Activated CD8-positive, alpha-beta T cell treated with anti-CD3 and anti-CD28 coated beads for 36 hours (primary cell): ENCODE measurements at regions of chr15 and their contacts with region 1.

Region 1: GRCh38 chr15:56052395-56053045 is 59.1 kb upstream of the NEDD4 start:
- DNase-seq: peak; percentile 35
- ATAC-seq: peak; percentile 86
- H3K4me3 Mint-ChIP-seq: no peak overlapping the region
- H3K27ac Mint-ChIP-seq: no peak overlapping the region
- H3K4me1 Mint-ChIP-seq: peaks cover 4% of the 10 kb centered on the region
- H3K27me3 Mint-ChIP-seq: no peaks in the 10 kb centered on the region
- CTCF ChIP-seq: peak; percentile 75

Region 2: GRCh38 chr15:55654561-55655031 is 397.9 kb before region 1 on chr15:
- CTCF ChIA-PET with region 1: interaction called, 3 read pairs
- POLR2A ChIA-PET with region 1: no interaction called
- intact Hi-C with region 1: loop called (anchors 5 kb)
- DNase-seq: no peak
- ATAC-seq: no peak
- H3K4me3 Mint-ChIP-seq: no peak overlapping the region
- H3K27ac Mint-ChIP-seq: no peak overlapping the region
- H3K4me1 Mint-ChIP-seq: no peaks in the 10 kb centered on the region
- H3K27me3 Mint-ChIP-seq: peaks cover 5% of the 10 kb centered on the region
- CTCF ChIP-seq: no peak

Region 3: DNA sequence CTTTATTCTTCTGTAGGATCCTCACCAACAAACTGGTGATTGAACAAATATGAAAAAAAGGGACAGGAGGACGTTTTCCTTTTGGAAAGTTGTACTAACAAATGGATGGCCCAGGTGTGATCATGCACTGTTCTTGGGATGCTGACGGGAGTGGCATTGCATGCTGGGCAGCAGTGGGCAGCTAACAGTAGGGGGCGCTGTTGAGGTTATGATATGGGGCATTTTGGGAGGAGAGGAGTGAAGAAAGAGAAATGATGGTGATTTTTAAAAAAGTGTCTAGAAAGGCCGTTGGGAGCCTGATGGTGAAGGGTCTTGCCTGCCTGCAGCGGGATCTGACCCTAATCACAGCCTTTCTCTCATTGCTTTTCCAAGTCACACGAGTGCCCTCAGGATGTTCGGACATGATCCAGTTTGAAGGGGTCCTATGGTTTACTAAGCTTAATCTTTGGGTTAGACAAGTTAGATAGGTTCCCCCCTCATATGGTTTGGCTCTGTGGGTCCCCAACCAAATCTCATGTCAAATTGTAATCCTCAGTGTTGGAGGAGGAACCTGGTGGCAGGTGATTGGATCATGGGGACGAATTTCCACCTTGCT is 263.4 kb before region 1 on chr15:
- CTCF ChIA-PET with region 1: interaction called, 12 read pairs
- POLR2A ChIA-PET with region 1: no interaction called
- intact Hi-C with region 1: loop called (anchors 5 kb)
- DNase-seq: peak; percentile 71
- ATAC-seq: peak; percentile 39
- H3K4me3 Mint-ChIP-seq: no peak overlapping the region
- H3K27ac Mint-ChIP-seq: no peak overlapping the region
- H3K4me1 Mint-ChIP-seq: no peaks in the 10 kb centered on the region
- H3K27me3 Mint-ChIP-seq: peaks cover 2% of the 10 kb centered on the region
- CTCF ChIP-seq: peak; percentile 75

Region 4: GRCh38 chr15:55917881-55918296 is 134.6 kb before region 1 on chr15:
- CTCF ChIA-PET with region 1: interaction called, 15 read pairs
- POLR2A ChIA-PET with region 1: no interaction called
- intact Hi-C with region 1: no loop called
- DNase-seq: peak; percentile 14
- ATAC-seq: no peak
- H3K4me3 Mint-ChIP-seq: no peak overlapping the region
- H3K27ac Mint-ChIP-seq: no peak overlapping the region
- H3K4me1 Mint-ChIP-seq: no peaks in the 10 kb centered on the region
- H3K27me3 Mint-ChIP-seq: no peaks in the 10 kb centered on the region
- CTCF ChIP-seq: no peak

Region 5: DNA sequence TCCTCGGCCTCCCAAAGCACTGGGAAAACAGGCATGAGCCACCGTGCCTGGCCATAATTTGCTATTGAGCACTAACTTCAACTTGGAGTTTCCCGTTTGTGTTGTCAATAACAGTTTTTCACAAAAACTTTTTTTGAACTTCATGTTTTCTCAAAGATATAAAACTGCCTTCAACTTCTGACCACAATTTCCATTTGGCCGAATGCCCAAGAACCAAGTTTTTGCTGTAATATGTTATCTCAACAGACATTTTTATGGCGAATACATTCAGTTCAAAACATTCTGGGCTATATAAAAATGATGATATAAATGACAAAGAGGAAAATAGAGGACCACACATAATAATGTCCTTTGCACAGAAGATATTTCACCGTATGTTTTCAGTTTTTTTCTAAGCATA is 115.5 kb before region 1 on chr15:
- CTCF ChIA-PET with region 1: no interaction called
- POLR2A ChIA-PET with region 1: no interaction called
- intact Hi-C with region 1: no loop called
- DNase-seq: no peak
- ATAC-seq: no peak
- H3K4me3 Mint-ChIP-seq: no peak overlapping the region
- H3K27ac Mint-ChIP-seq: no peak overlapping the region
- H3K4me1 Mint-ChIP-seq: no peaks in the 10 kb centered on the region
- H3K27me3 Mint-ChIP-seq: no peaks in the 10 kb centered on the region
- CTCF ChIP-seq: no peak

Region 6: DNA sequence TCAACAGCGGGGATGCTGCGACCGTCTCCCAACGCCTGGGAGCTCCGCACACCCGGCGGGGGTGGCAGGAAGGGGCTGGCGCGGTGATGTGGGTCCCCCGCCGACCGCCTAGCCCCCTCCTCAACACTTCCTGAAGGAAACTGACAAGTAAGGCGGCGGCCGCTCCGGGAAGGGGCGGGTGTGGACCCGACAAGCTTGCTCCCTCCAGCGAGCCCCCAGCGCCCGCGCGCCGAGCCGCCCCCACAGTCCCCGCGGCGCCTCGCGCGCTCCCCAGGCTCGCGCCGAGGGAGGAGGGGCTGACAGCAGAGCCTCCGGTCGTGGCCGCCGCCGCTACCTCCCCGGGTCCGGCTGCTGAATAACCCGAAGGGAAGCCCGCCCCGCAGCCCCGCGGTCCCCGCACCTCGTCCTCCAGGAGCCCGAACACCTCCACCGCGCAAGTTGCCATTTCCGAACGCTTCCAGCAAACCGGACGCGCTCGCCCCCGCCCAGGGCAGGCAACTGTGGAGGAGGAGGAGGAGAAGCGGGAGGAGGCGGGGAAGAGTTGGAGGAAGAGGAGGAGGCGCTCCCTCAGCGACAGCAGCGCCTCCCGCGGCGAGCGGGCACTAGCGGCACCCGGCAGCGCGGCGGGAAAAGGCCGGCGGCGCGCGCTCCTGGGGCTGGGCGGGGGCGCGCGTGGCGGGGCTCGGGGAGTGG is 59.3 kb before region 1 on chr15 and contains the start of gene NEDD4:
- CTCF ChIA-PET with region 1: interaction called, 14 read pairs
- POLR2A ChIA-PET with region 1: no interaction called
- intact Hi-C with region 1: no loop called
- DNase-seq: peak; percentile 75
- ATAC-seq: peak; percentile 88
- H3K4me3 Mint-ChIP-seq: peak within 1 kb of the TSS; percentile 85
- H3K27ac Mint-ChIP-seq: peak within 1 kb of the TSS; percentile 81
- H3K4me1 Mint-ChIP-seq: peaks cover 22% of the 10 kb centered on the region
- H3K27me3 Mint-ChIP-seq: peaks cover 17% of the 10 kb centered on the region
- CTCF ChIP-seq: peak; percentile 40
- total RNA-seq, gene NEDD4: 10.4 to 11.8 TPM